HCT116 (cell line): ENCODE measurements at regions of chr2 and their contacts with region 1.

Region 1: DNA sequence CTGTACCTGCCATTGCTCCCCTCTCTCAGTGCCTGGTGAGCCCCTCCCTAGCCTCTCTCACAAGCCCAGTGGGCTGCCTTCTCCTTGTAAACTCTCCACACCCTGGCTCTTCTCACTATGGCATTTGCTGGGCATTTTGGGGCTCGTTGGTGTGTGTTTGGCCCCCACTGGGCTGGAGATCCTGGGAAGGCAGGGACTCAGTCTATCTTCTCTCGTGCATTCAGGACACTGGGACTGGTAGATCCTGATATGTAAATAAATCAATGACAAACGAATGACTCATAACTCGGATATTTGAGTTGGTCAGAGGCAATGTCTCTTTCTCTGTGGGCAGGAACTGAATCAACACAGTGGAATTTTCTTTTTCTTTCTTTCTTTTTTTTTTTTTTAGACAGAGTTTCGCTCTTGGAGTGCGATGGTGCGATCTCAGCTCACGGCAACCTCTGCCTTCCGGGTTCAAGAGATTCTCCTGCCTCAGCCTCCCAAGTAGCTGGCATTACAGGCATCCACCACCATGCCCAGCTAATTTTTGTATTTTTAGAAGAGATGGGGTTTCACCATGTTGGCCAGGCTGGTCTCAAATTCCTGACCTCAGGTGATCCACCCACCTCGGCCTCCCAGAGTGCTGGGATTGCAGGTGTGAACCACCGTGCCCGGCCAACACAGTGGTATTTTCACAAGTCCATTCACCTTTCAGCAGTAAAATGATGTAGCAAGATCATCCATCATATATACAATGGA is 144.6 kb upstream of the SPRED2 start:
- DNase-seq: peak; percentile 90
- ATAC-seq: peak; percentile 83
- H3K4me3 ChIP-seq: peak overlapping the region; percentile 12 to 31; a peak in 3 of 4 replicates
- H3K27ac ChIP-seq: peak overlapping the region; percentile 76
- H3K4me1 ChIP-seq: peaks cover 27 to 69% of the 10 kb centered on the region in 2 experiments
- H3K27me3 ChIP-seq: no peaks in the 10 kb centered on the region
- CTCF ChIP-seq: no peak
- POLR2A ChIP-seq: no peak
- RAD21 ChIP-seq: no peak

Region 2: GRCh38 chr2:63827749-63828148 is 1749.3 kb before region 1 on chr2:
- CTCF ChIA-PET with region 1: no interaction called
- POLR2A ChIA-PET with region 1: no interaction called
- RAD21 ChIA-PET with region 1: no interaction called
- intact Hi-C with region 1: no loop called
- DNase-seq: peak; percentile 32
- ATAC-seq: peak; percentile 91
- H3K4me3 ChIP-seq: no peak overlapping the region; a peak in 1 of 4 replicates
- H3K27ac ChIP-seq: no peak overlapping the region
- H3K4me1 ChIP-seq: peaks cover 2 to 13% of the 10 kb centered on the region in 2 experiments; a peak in 2 of 4 replicates
- H3K27me3 ChIP-seq: no peaks in the 10 kb centered on the region
- CTCF ChIP-seq: no peak
- POLR2A ChIP-seq: no peak
- RAD21 ChIP-seq: no peak

Region 3: GRCh38 chr2:65070172-65070830 is 506.7 kb before region 1 on chr2:
- CTCF ChIA-PET with region 1: no interaction called
- POLR2A ChIA-PET with region 1: no interaction called
- RAD21 ChIA-PET with region 1: no interaction called
- intact Hi-C with region 1: loop called (anchors 2 kb)
- DNase-seq: peak; percentile 27
- ATAC-seq: peak; percentile 75
- H3K4me3 ChIP-seq: peak overlapping the region in 1 of 2 experiments; percentile 19; a peak in 2 of 4 replicates
- H3K27ac ChIP-seq: peak overlapping the region; percentile 78
- H3K4me1 ChIP-seq: peaks cover 29 to 50% of the 10 kb centered on the region in 2 experiments
- H3K27me3 ChIP-seq: no peaks in the 10 kb centered on the region
- CTCF ChIP-seq: peak in 2 of 3 experiments; percentile 25 to 26; a peak in 2 of 6 replicates
- POLR2A ChIP-seq: no peak
- RAD21 ChIP-seq: peak; percentile 30; the same call in 1 of the 2 replicates

Region 4: DNA sequence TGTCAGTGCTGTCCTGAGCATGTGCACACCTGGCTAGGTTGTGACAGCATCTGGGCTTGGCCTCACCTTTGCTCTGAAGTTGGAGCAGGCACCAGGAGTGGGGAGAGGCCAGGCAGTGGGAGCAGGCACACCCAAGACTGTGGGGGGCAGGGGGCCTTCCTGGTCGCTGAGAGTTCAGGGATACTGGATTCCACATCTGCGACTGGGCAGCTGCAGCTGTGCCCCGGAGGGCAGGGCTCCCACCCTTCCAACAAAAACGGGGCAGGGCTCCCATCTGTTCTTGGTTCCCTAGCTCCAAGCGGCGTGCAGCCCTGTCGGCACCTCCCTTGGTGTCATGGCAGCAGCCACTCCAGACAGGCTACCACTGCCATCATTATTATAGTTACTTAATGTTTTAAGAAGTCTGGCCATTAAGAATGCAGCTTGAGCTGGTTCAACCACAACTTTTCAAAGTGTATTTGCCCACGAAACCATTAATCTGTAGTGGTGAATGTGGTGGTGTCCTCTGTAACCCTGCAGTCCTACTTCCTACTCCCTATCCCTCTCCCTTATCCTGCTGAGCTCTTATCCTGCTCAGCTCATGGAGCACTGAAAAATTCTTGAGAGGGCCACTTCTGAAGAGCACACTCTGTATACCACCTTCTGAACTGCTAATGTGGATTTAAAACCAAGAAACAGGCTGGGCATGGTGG is 399.1 kb before region 1 on chr2:
- CTCF ChIA-PET with region 1: no interaction called
- POLR2A ChIA-PET with region 1: no interaction called
- RAD21 ChIA-PET with region 1: no interaction called
- intact Hi-C with region 1: loop called (anchors 10 kb)
- DNase-seq: no peak
- ATAC-seq: no peak
- H3K4me3 ChIP-seq: no peak overlapping the region
- H3K27ac ChIP-seq: no peak overlapping the region
- H3K4me1 ChIP-seq: peaks cover 2 to 17% of the 10 kb centered on the region in 2 experiments; a peak in 3 of 4 replicates
- H3K27me3 ChIP-seq: no peaks in the 10 kb centered on the region
- CTCF ChIP-seq: no peak
- POLR2A ChIP-seq: no peak
- RAD21 ChIP-seq: no peak